PC-9 (cell line): ENCODE measurements at regions of chr19 and their contacts with region 1.

Region 1: DNA sequence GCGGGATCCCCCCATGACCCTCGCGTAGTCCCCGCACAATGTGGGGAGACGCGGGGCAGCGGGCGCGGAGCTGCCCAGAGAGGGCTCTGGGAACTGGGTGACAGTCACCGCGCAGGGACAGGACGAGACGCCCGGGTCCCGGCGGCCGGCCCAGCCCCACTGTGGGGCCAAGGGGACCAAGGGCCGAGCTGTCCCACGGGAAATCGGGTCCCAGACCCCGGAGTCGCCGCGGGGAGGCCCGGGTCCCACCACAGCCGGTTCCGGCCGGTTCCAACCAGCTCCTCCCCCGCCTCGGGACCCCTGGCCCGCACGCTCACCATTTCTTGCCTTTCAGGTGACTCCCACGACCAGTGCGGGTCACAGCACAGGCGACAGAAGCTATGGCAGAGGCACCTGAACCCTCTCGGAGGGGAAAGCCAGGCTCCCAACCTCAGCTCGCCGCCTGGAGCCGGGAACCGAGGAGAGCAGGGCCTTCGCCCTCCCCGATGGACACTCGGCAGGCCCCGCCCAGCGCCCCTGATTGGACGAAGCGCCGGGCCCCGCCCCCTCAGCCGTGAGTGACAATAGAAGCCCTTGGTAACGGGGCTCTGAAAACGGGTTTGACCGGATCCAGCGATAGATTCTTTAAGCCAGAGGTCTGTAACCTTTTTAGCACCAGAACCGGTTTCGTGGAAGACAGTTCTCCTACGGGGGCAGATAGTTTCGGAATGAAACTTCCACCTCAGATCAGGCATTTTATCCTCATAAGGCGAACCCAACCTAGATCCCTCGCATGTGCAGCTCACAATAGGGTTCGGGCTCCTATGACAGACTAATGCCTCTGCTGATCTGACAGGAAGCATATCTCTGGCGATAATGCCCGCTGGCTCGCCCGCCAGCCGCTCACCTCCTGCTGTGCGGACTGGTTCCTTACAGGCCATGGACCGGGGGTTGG is at the start of gene ZNF433:
- DNase-seq: peak; percentile 93 to 96
- H3K4me3 ChIP-seq: peak within 1 kb of the TSS; percentile 59
- H3K27ac ChIP-seq: no peak within 1 kb of the TSS
- H3K4me1 ChIP-seq: no peaks in the 10 kb centered on the region
- H3K27me3 ChIP-seq: no peaks in the 10 kb centered on the region
- CTCF ChIP-seq: no peak
- total RNA-seq, gene ZNF433: 2.6 and 3.1 TPM in 2 replicates

Region 2: DNA sequence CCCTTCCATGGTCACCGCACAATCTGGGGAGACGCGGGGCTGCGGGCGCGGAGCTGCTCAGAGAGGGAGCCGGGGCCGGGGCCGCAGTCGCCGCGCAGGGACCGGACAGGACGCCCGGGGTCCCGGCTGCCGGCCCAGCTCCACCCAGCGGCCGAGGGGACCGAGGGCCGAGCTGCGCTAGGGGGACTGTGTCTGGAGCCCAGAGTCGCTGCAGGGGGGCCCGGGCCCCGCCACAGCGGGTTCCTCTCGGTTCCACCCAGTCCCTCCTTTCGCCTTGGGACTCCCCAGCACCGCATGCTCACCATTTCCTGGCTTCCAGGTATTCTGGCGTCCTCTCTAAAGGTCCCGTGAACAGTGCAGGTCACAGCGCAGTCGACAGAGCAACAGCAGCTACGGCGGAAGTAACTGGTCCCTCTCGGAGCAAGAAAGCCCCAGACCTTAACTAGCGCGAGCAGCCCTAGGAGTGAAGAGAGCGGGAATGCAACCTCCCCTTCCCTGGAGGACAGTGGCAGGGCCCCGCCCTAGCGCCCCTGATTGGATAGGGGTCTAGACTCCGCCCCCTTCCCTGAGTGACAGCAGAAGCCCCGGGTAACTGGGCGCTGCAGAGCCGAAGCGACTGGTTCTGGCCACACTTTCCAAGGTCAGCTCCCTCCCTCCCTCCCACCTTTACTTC is 17.1 kb after region 1 on chr19 and contains the start of gene ZNF878:
- CTCF ChIA-PET with region 1: interaction called, 11 read pairs
- POLR2A ChIA-PET with region 1: interaction called, 14 read pairs
- intact Hi-C with region 1: no loop called
- DNase-seq: peak in 1 of 2 experiments; percentile 86
- H3K4me3 ChIP-seq: peak within 1 kb of the TSS; percentile 43
- H3K27ac ChIP-seq: no peak within 1 kb of the TSS
- H3K4me1 ChIP-seq: no peaks in the 10 kb centered on the region
- H3K27me3 ChIP-seq: no peaks in the 10 kb centered on the region
- CTCF ChIP-seq: no peak
- total RNA-seq, gene ZNF878: 0.33 and 0.46 TPM in 2 replicates

Region 3: DNA sequence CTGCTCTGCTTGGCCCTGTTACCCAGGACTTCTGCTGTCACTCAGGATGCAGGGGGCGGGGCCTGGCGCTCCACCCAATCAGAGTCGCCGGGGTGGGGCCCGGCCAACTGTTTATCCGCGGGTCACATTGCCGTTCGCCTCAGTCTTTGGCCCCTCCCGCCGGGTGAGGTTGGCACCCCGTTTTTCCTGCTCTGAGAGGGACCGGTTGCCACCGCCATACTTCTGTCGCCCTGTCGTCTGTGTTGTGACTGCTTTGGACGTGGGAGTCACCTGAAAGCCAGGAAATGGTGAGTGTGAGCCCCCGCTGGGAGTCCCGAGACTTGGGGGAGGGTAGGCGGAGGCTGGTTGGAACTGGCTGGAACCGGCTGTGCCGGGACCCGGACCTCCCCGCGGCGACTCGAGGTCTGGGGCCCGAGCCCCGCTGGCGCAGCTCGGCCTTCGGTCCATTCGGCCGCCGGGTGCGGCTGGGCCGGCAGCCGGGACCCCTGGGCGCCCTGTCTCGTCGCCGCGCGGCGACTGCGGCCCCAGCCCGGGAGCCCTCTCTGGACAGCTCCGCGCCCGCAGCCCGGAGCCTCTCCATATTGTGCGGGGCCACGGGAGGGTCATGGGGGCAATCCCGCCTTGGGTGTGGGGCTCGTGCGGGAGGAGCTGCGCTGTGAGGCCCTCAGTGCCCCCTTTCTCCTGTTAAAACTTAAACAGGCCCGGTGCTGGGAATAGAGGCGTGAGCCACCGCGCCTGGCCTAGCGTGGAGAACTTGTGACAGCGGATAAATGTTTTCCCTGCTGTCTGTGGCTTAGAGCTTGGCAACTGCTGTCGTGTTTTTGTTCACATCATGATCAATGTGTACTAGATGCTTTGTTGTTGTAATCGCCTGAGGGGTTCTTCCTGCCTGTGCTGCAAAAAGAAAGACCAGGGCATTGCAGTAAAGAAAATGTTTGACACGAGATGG is 29.4 kb after region 1 on chr19 and contains the start of gene ZNF844:
- CTCF ChIA-PET with region 1: no interaction called
- POLR2A ChIA-PET with region 1: no interaction called
- intact Hi-C with region 1: loop called (anchors 1 kb)
- DNase-seq: peak; percentile 83 to 95
- H3K4me3 ChIP-seq: peak within 1 kb of the TSS; percentile 67
- H3K27ac ChIP-seq: no peak within 1 kb of the TSS
- H3K4me1 ChIP-seq: no peaks in the 10 kb centered on the region
- H3K27me3 ChIP-seq: no peaks in the 10 kb centered on the region
- CTCF ChIP-seq: no peak
- total RNA-seq, gene ZNF844: 4.9 and 6.6 TPM in 2 replicates

Region 4: GRCh38 chr19:12075538-12076139 is 40.2 kb after region 1 on chr19:
- CTCF ChIA-PET with region 1: no interaction called
- POLR2A ChIA-PET with region 1: no interaction called
- intact Hi-C with region 1: no loop called
- DNase-seq: peak in 1 of 2 experiments; percentile 38
- H3K4me3 ChIP-seq: no peak overlapping the region
- H3K27ac ChIP-seq: no peak overlapping the region
- H3K4me1 ChIP-seq: no peaks in the 10 kb centered on the region
- H3K27me3 ChIP-seq: no peaks in the 10 kb centered on the region
- CTCF ChIP-seq: no peak